ENCODE measurements at regions of chr22 and their contacts with region 1.

Region 1: GRCh38 chr22:31602259-31602952 is 59.6 kb downstream of the PISD start:
- DNase-seq: no peak
- H3K4me3 ChIP-seq: no peak overlapping the region
- H3K4me3 Mint-ChIP-seq: no peak overlapping the region
- H3K27ac ChIP-seq: no peak overlapping the region
- H3K27ac Mint-ChIP-seq: no peak overlapping the region
- H3K4me1 ChIP-seq: no peaks in the 10 kb centered on the region
- H3K4me1 Mint-ChIP-seq: no peaks in the 10 kb centered on the region
- H3K27me3 ChIP-seq: no peaks in the 10 kb centered on the region
- H3K27me3 Mint-ChIP-seq: no peaks in the 10 kb centered on the region

Region 2: GRCh38 chr22:31394326-31394725 is 208.1 kb before region 1 on chr22:
- CTCF ChIA-PET with region 1: no interaction called
- POLR2A ChIA-PET with region 1: interaction called, 11 read pairs
- DNase-seq: no peak
- H3K4me3 ChIP-seq: no peak overlapping the region
- H3K4me3 Mint-ChIP-seq: peak overlapping the region in 2 of 7 donors; percentile 18 to 49
- H3K27ac ChIP-seq: no peak overlapping the region
- H3K27ac Mint-ChIP-seq: peak overlapping the region in 1 of 8 donors; percentile 4
- H3K4me1 ChIP-seq: peaks cover 6% of the 10 kb centered on the region
- H3K4me1 Mint-ChIP-seq: peaks cover 2 to 5% (median 5%) of the 10 kb centered on the region in 3 donors
- H3K27me3 ChIP-seq: no peaks in the 10 kb centered on the region
- H3K27me3 Mint-ChIP-seq: peaks cover 4% of the 10 kb centered on the region in 2 donors

Region 3: DNA sequence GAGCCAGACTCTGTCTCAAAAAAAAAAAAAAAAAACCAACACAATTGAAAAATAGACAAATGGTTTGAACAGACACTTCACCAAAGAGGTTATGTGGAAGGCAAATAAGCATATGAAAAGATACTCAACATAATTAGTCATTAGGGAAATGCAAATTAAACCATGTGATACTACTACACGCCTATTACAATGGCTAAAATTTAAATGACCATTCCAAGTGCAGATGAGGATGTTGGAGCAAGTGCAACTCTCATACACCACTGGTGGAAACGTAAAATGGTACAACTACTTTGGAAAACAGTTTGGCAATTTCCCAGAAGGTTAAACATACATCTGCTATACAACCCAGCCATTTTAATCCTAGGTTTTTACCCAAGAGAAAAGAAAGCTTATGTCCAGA is 137.1 kb before region 1 on chr22:
- CTCF ChIA-PET with region 1: no interaction called
- POLR2A ChIA-PET with region 1: no interaction called
- DNase-seq: no peak
- H3K4me3 ChIP-seq: no peak overlapping the region
- H3K4me3 Mint-ChIP-seq: no peak overlapping the region
- H3K27ac ChIP-seq: no peak overlapping the region
- H3K27ac Mint-ChIP-seq: no peak overlapping the region
- H3K4me1 ChIP-seq: no peaks in the 10 kb centered on the region
- H3K4me1 Mint-ChIP-seq: peaks cover 0 to 4% (median 0%) of the 10 kb centered on the region in 3 donors
- H3K27me3 ChIP-seq: no peaks in the 10 kb centered on the region
- H3K27me3 Mint-ChIP-seq: no peaks in the 10 kb centered on the region

Measured in CD8-positive, alpha-beta memory T cell (primary cell).